Gastrocnemius medialis (tissue), 4 donors: ENCODE measurements at regions of chr11 and their contacts with region 1.

Region 1: GRCh38 chr11:62542750-62543567 is 3.6 kb downstream of the AHNAK start:
- DNase-seq: peak; percentile 80 to 90
- ATAC-seq: peak; percentile 37 to 40
- H3K4me3 ChIP-seq: peak overlapping the region; percentile 76 to 95 (median 90)
- H3K27ac ChIP-seq: peak overlapping the region; percentile 97 to 100 (median 100)
- H3K4me1 ChIP-seq: peaks cover 62 to 65% of the 10 kb centered on the region in 2 donors
- H3K27me3 ChIP-seq: no peaks in the 10 kb centered on the region
- CTCF ChIP-seq: peak; percentile 99 to 100 (median 100)
- POLR2A ChIP-seq: peak; percentile 60 to 63

Region 2: DNA sequence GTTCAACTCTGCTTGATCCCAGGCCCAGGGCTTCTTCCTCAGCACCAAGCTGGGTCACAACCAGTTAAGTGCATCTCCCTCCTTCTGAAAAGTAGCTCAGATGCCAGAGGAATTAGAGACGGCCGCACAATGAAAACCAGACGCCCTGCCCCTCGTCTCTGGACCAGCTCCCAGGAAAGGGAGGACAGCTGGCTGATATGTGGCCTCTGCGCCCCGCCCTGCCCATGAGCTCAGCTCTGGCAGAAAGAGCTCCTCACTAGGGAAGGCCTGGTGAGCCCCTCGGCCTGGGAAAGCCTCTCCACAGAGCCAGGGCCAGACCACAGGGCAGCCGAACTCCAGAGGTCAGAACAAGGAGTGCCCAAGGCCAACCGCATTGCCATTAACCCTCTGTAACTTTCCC is 142.2 kb before region 1 on chr11:
- in situ Hi-C with region 1: loop called in 1 of 4 experiments (anchors 25 kb)
- intact Hi-C with region 1: loop called (anchors 2 kb)
- DNase-seq: peak; percentile 49 to 80
- ATAC-seq: peak; percentile 55 to 74
- H3K4me3 ChIP-seq: no peak overlapping the region
- H3K27ac ChIP-seq: peak overlapping the region; percentile 1 to 57 (median 57)
- H3K4me1 ChIP-seq: peaks cover 45 to 46% of the 10 kb centered on the region in 2 donors
- H3K27me3 ChIP-seq: no peaks in the 10 kb centered on the region
- CTCF ChIP-seq: no peak
- POLR2A ChIP-seq: no peak

Region 3: GRCh38 chr11:62427630-62428233 is 115.2 kb before region 1 on chr11:
- in situ Hi-C with region 1: loop called in 2 of 4 experiments (anchors 10 to 25 kb)
- intact Hi-C with region 1: loop called (anchors 2 kb)
- DNase-seq: no peak
- ATAC-seq: no peak
- H3K4me3 ChIP-seq: no peak overlapping the region
- H3K27ac ChIP-seq: peak overlapping the region in 1 of 4 donors; percentile 5
- H3K4me1 ChIP-seq: no peaks in the 10 kb centered on the region
- H3K27me3 ChIP-seq: no peaks in the 10 kb centered on the region
- CTCF ChIP-seq: no peak
- POLR2A ChIP-seq: no peak

Region 4: DNA sequence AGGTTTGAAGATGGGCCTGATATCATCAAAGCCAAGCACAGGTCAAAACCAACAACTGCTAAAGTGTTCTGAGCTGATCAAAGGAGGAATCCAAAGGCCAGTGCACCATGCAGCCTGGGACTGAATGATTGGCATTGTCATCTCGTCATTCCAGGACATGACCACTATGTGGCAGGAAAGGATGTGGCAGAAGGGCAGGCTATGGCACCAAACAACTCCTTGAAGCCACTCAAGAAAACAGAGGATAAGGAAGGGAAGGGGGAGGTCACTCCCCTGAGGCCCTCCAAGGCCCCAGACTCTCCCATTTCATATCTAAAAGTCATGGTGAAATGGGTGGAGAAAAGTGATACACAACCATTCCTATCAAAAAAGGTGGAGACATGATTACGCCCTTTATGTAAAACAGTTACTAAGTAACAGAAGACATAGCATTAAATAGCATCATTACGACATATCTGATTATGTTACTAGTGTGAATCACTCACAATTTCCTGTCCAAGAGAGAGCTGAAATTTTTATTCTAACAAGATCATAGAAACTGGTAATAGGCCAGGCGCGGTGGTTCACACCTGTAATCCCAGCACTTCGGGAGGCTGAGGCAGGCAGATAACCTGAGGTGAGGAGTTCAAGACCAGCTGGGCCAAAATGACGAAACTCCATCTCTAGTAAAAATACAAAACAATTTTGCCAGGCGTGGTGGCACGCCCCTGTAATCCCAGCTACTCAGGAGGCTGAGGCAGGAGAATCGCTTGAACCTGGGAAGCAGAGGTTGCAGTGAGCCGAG is 45.6 kb before region 1 on chr11:
- in situ Hi-C with region 1: loop called in 1 of 4 experiments (anchors 5 kb)
- intact Hi-C with region 1: loop called (anchors 1 kb)
- DNase-seq: peak; percentile 35 to 69
- ATAC-seq: peak; percentile 84 to 90
- H3K4me3 ChIP-seq: no peak overlapping the region
- H3K27ac ChIP-seq: peak overlapping the region; percentile 67 to 83 (median 80)
- H3K4me1 ChIP-seq: peaks cover 33 to 54% of the 10 kb centered on the region in 2 donors
- H3K27me3 ChIP-seq: no peaks in the 10 kb centered on the region
- CTCF ChIP-seq: peak; percentile 55 to 69 (median 63)
- POLR2A ChIP-seq: no peak

Region 5: DNA sequence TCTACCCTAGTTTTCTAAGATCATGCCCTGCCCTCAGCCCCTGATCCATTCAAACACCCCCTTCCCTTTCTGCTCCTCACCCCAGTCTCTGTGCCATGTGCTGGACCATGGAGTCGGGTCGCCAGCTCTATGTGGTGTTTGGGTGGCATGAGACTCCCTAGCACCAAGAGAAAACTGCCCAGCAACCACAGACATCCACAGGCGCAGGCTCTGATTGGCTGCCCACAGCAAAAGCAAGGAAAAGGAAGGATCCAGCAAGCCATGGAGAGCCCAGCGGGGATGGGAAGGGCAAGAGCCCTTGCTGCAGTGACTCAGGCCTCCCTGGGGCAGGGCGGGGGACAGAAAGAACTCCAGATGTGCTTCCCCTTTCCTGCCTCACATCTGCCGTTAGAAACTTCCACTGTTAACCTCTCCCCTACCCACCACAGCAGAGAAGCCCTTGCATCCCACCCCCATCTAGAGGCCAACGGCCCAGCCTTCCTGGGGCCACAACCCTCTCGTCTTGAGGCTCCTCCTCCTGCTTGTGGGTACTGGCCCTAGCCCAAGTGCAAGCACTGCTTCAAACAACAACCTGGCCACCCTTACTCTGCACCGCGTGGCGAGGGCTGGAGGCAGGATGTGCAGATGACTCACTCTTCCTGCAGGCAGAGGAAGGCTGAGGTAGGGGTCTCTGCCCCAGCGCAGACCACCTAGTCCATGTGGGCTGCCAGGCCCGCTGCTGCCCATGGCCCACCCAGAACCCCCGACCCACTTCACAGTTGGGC is 13.3 kb after region 1 on chr11:
- in situ Hi-C with region 1: no loop called
- intact Hi-C with region 1: loop called (anchors 1 kb)
- DNase-seq: peak; percentile 89 to 94
- ATAC-seq: peak; percentile 40 to 42
- H3K4me3 ChIP-seq: peak overlapping the region in 2 of 4 donors; percentile 8 to 23
- H3K27ac ChIP-seq: peak overlapping the region; percentile 97 to 100 (median 100)
- H3K4me1 ChIP-seq: peaks cover 86 to 90% of the 10 kb centered on the region in 2 donors
- H3K27me3 ChIP-seq: no peaks in the 10 kb centered on the region
- CTCF ChIP-seq: no peak
- POLR2A ChIP-seq: peak in 1 of 2 donors; percentile 35

Region 6: DNA sequence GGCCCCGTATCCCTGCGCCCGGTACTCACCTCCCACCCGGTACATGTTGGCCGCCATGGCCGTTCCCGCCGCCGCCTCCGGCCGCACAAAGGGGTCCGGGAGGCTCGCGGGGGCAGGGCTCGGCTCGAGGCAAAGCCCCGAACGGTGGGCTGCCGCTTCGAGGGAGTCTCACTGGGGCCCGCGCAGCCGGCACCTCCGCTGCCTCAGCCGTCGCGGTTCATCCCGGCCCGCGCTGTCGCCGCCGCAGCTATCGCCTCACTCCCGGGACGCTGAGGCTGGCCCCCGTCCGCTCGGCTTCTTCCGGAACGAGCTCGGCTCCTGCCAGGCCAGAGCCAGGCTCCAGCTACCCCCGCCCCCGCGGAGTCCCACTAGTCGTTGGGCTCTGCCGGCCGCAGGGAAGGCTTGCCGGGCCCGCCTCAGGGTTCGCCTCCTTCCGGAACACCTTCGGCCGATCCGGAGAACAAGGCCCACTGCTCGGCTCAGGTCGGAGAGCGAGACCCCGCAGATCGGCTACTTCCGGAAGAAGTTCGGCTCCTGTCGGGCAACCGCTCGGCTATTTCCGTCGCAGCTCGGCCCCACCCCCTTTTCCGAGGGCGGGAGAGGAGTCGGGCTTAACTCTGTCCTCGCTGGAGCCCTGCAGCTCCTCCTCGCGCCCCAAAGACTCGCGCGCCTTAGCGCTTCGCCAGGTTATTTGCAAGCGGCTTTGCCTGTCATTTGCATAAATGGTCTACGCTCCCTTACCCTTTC is 58.6 kb after region 1 on chr11 and contains the start of gene MTA2:
- in situ Hi-C with region 1: no loop called
- intact Hi-C with region 1: loop called (anchors 5 kb)
- DNase-seq: peak; percentile 97
- ATAC-seq: peak; percentile 83 to 85
- H3K4me3 ChIP-seq: peak within 1 kb of the TSS; percentile 84 to 99 (median 98)
- H3K27ac ChIP-seq: peak within 1 kb of the TSS; percentile 87 to 97 (median 94)
- H3K4me1 ChIP-seq: peaks cover 17 to 29% of the 10 kb centered on the region in 2 donors
- H3K27me3 ChIP-seq: no peaks in the 10 kb centered on the region
- CTCF ChIP-seq: no peak
- POLR2A ChIP-seq: peak; percentile 43 to 57
- total RNA-seq, gene MTA2: 28.0 to 47.1 (median 31.7) TPM

Region 7: DNA sequence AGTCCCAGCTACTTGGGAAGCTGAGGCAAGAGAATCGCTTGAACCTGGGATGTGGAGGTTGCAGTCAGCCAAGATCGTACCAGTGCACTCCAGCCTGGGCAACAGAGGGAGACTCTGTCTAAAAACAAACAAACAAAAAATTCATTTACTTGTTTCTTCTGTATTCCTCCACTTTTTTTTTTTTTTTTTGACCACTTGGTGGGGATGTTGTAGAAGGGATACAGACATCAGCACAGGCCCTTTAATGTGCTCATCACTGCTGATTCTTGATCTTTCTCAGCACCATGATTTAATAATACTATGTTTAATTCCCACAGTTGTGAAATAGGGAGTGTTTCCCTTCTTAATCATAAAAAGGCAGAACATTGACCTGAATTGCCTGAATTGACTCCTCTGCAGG is 189.8 kb after region 1 on chr11:
- in situ Hi-C with region 1: no loop called
- intact Hi-C with region 1: no loop called
- DNase-seq: no peak
- ATAC-seq: no peak
- H3K4me3 ChIP-seq: no peak overlapping the region
- H3K27ac ChIP-seq: no peak overlapping the region
- H3K4me1 ChIP-seq: peaks cover 18% of the 10 kb centered on the region in 2 donors
- H3K27me3 ChIP-seq: no peaks in the 10 kb centered on the region
- CTCF ChIP-seq: no peak
- POLR2A ChIP-seq: no peak

Region 8: GRCh38 chr11:62841361-62842184 is 298.6 kb after region 1 on chr11:
- in situ Hi-C with region 1: no loop called
- intact Hi-C with region 1: loop called (anchors 5 kb)
- DNase-seq: peak; percentile 85 to 91
- ATAC-seq: peak; percentile 73 to 76
- H3K4me3 ChIP-seq: peak overlapping the region; percentile 82 to 100 (median 96)
- H3K27ac ChIP-seq: peak overlapping the region; percentile 97 to 99 (median 98)
- H3K4me1 ChIP-seq: peaks cover 20% of the 10 kb centered on the region in 2 donors
- H3K27me3 ChIP-seq: no peaks in the 10 kb centered on the region
- CTCF ChIP-seq: peak in 1 of 5 experiments; percentile 5
- POLR2A ChIP-seq: peak; percentile 99 to 100